ENCODE measurements at regions of chr6 and their contacts with region 1.

Region 1: GRCh38 chr6:150735341-150735851 is 130.1 kb upstream of the MTHFD1L start:
- DNase-seq: no peak
- ATAC-seq: no peak
- H3K4me3 ChIP-seq: no peak overlapping the region
- H3K27ac ChIP-seq: no peak overlapping the region
- H3K4me1 ChIP-seq: no peaks in the 10 kb centered on the region
- H3K27me3 ChIP-seq: no peaks in the 10 kb centered on the region
- CTCF ChIP-seq: no peak
- POLR2A ChIP-seq: no peak
- RAD21 ChIP-seq: no peak

Region 2: GRCh38 chr6:151054311-151054710 is 318.9 kb after region 1 on chr6:
- CTCF ChIA-PET with region 1: no interaction called
- POLR2A ChIA-PET with region 1: interaction called, 11 read pairs
- dilution Hi-C with region 1: no loop called
- in situ Hi-C with region 1: no loop called
- intact Hi-C with region 1: no loop called
- DNase-seq: peak; percentile 62
- ATAC-seq: peak; percentile 33; the same call in 1 of the 2 replicates
- H3K4me3 ChIP-seq: no peak overlapping the region
- H3K27ac ChIP-seq: no peak overlapping the region
- H3K4me1 ChIP-seq: peaks cover 8% of the 10 kb centered on the region; the same call in 1 of the 2 replicates
- H3K27me3 ChIP-seq: no peaks in the 10 kb centered on the region
- CTCF ChIP-seq: no peak
- POLR2A ChIP-seq: no peak
- RAD21 ChIP-seq: no peak

Region 3: GRCh38 chr6:151112130-151112529 is 376.7 kb after region 1 on chr6:
- CTCF ChIA-PET with region 1: no interaction called
- POLR2A ChIA-PET with region 1: no interaction called
- dilution Hi-C with region 1: no loop called
- in situ Hi-C with region 1: no loop called
- intact Hi-C with region 1: no loop called
- DNase-seq: no peak
- ATAC-seq: no peak
- H3K4me3 ChIP-seq: no peak overlapping the region
- H3K27ac ChIP-seq: no peak overlapping the region
- H3K4me1 ChIP-seq: peaks cover 9% of the 10 kb centered on the region
- H3K27me3 ChIP-seq: peaks cover 39% of the 10 kb centered on the region
- CTCF ChIP-seq: no peak
- POLR2A ChIP-seq: no peak
- RAD21 ChIP-seq: no peak